Activated CD8-positive, alpha-beta memory T cell treated with anti-CD3 and anti-CD28 coated beads, Interleukin-2, amount 10 ng/mL, durations not matched to agents 7 days and 5 days (primary cell): ENCODE measurements at regions of chr1 and their contacts with region 1.

Region 1: GRCh38 chr1:153532769-153533599 is 2.8 kb downstream of the S100A6 start:
- DNase-seq: peak; percentile 89
- ATAC-seq: peak; percentile 32
- H3K4me3 Mint-ChIP-seq: peak overlapping the region; percentile 97
- H3K27ac Mint-ChIP-seq: peak overlapping the region; percentile 95
- H3K4me1 Mint-ChIP-seq: peaks cover 62% of the 10 kb centered on the region
- H3K27me3 Mint-ChIP-seq: no peaks in the 10 kb centered on the region

Region 2: DNA sequence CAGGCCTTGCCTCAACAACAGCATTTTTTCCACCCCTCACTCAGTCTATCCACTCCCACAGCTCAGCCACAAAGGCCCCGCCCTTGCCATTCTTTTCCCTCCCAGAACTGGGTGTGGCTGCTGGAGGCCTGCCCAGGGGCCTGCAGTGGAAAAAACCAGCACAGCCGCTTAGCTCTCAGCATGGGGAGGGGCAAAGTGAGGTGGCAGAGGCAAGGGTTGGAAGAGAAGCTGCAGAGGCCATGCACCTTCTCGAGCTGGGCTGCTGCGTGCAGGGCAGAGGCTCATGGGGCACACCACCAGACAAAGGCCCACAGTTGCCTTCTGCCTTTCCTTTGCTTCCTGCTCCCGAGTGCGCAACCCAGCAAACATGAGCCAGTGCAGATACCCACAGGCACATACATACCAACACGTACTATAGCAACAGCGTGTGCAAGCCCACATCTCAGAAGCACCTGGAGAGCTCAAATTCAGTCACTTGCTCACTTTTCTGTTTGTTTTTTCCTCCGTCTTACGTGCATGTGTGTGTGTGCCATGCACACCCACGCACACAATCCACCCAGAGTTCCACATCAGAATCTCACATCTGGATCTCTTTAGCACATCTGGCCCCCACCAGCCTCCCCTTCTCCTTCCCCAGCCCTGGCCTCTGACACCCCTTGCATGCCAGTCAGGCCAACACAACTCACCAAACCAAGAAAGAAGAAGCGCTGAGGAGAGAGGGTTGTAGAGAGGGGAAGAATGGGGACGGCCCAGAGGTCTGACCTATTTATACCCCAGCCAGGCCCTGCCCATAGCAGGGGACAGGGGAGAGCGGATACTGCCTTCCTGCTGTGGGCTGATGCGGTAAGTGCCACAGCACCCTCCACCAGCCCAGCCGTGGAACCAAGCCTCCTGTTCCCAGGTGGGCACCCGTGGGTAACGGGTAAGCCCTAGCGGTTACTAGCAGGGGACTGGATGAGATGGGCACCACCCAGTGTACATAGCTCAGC is 12.4 kb after region 1 on chr1 and contains the start of gene S100A4:
- CTCF ChIA-PET with region 1: interaction called, 124 read pairs
- DNase-seq: peak; percentile 97
- ATAC-seq: peak; percentile 85
- H3K4me3 Mint-ChIP-seq: peak within 1 kb of the TSS; percentile 96
- H3K27ac Mint-ChIP-seq: peak within 1 kb of the TSS; percentile 97
- H3K4me1 Mint-ChIP-seq: peaks cover 78% of the 10 kb centered on the region
- H3K27me3 Mint-ChIP-seq: peaks cover 3% of the 10 kb centered on the region
- total RNA-seq, gene S100A4: 898 to 906 TPM

Region 3: GRCh38 chr1:153553830-153554541 is 21.0 kb after region 1 on chr1:
- CTCF ChIA-PET with region 1: interaction called, 37 read pairs
- DNase-seq: no peak
- ATAC-seq: no peak
- H3K4me3 Mint-ChIP-seq: no peak overlapping the region
- H3K27ac Mint-ChIP-seq: no peak overlapping the region
- H3K4me1 Mint-ChIP-seq: peaks cover 11% of the 10 kb centered on the region
- H3K27me3 Mint-ChIP-seq: peaks cover 3% of the 10 kb centered on the region

Region 4: GRCh38 chr1:153561466-153561985 is 28.5 kb after region 1 on chr1:
- CTCF ChIA-PET with region 1: interaction called, 41 read pairs
- DNase-seq: no peak
- ATAC-seq: no peak
- H3K4me3 Mint-ChIP-seq: no peak overlapping the region
- H3K27ac Mint-ChIP-seq: no peak overlapping the region
- H3K4me1 Mint-ChIP-seq: peaks cover 12% of the 10 kb centered on the region
- H3K27me3 Mint-ChIP-seq: no peaks in the 10 kb centered on the region

Region 5: GRCh38 chr1:153566440-153567379 is 33.7 kb after region 1 on chr1:
- CTCF ChIA-PET with region 1: interaction called, 214 read pairs
- DNase-seq: peak; percentile 93
- ATAC-seq: peak; percentile 94
- H3K4me3 Mint-ChIP-seq: peak overlapping the region; percentile 17
- H3K27ac Mint-ChIP-seq: peak overlapping the region; percentile 98
- H3K4me1 Mint-ChIP-seq: peaks cover 41% of the 10 kb centered on the region
- H3K27me3 Mint-ChIP-seq: peaks cover 5% of the 10 kb centered on the region

Region 6: DNA sequence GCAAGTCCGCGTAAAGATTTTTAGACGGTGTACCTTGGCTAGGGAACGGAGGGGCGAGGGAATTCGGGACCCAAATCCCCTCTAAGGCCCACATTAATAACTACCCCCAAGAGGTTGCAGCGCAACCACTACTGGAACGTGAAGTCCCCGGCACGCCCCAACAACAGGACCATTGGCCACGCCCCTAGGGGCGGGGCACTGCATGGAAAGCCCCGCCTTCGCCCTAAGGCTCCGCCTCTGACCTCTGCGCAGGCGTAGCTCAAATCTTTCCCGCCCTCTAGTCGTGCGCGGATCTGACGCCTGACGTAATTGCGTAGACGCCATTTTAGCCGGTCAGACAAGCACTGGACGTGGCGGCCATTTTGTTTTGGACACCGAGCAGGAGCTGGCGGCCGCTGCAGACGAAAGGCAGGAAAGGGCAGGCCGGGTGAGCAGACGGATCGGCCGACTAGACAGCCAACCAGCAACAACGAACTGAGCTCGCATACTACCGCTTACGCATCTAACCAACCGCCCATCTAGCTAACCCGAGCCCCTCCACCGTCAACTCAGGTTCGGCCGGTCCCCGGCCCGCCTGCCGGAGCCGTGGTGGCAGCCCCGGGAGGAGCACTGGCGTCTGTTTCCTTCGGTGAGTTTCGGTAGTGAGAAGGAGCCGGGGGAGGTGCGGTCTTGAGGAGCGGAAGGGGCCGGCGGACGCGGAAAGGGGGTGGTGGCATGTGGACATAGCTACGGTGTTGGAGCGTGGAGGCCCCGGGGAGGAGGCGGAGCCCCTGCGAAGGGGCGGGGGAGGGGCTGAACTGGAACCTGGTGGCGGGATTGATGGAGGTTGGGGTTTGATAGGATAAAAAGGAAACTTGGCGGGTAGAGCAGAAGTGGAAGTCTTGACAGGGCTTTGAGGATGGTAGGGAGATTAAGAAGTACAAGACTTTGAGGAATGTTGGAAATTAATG is 101.0 kb after region 1 on chr1 and contains the start of gene CHTOP:
- CTCF ChIA-PET with region 1: interaction called, 26 read pairs
- DNase-seq: peak; percentile 99
- ATAC-seq: peak; percentile 92
- H3K4me3 Mint-ChIP-seq: peak within 1 kb of the TSS; percentile 99
- H3K27ac Mint-ChIP-seq: peak within 1 kb of the TSS; percentile 100
- H3K4me1 Mint-ChIP-seq: peaks cover 42% of the 10 kb centered on the region
- H3K27me3 Mint-ChIP-seq: no peaks in the 10 kb centered on the region
- total RNA-seq, gene CHTOP: 83.8 to 89.1 TPM

Region 7: DNA sequence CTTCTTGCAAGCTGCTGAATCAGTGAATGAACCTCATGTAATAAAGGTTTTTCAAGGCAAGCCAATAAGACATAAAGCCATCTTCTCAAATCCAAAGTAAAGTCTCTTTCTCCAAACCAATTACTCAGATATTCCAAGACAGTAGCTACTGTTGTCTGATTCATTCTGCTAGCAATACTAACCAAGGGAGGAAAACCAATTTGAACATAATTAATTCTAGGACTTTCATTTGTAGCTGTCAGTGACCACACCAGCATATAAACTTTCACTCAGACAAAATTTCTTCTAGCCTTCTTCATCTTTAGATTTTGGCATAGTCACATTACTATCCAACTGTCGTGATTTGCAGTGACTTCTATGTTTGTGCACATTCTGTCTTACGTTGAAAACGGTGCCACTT is 184.3 kb after region 1 on chr1:
- CTCF ChIA-PET with region 1: no interaction called
- DNase-seq: no peak
- ATAC-seq: no peak
- H3K4me3 Mint-ChIP-seq: no peak overlapping the region
- H3K27ac Mint-ChIP-seq: no peak overlapping the region
- H3K4me1 Mint-ChIP-seq: peaks cover 6% of the 10 kb centered on the region
- H3K27me3 Mint-ChIP-seq: peaks cover 27% of the 10 kb centered on the region